Sigmoid colon (tissue), 7 donors: ENCODE measurements at regions of chr3 and their contacts with region 1.

Region 1: GRCh38 chr3:25427942-25428788 is at the start of gene RARB:
- DNase-seq: peak; percentile 92
- H3K4me3 ChIP-seq: peak within 1 kb of the TSS; percentile 62 to 73 (median 70)
- H3K27ac ChIP-seq: peak within 1 kb of the TSS; percentile 87 to 95 (median 91)
- H3K4me1 ChIP-seq: peaks cover 0 to 54% (median 42%) of the 10 kb centered on the region in 4 donors
- H3K27me3 ChIP-seq: no peaks in the 10 kb centered on the region
- CTCF ChIP-seq: no peak
- EP300 ChIP-seq: peak in 3 of 4 donors; percentile 17 to 81 (median 25)
- POLR2A ChIP-seq: peak; percentile 94 to 95
- total RNA-seq, gene RARB: 8.3 to 18.5 (median 11.9) TPM

Region 2: GRCh38 chr3:24843955-24844354 is 584.2 kb before region 1 on chr3:
- intact Hi-C with region 1: loop called (anchors 5 kb)
- DNase-seq: peak; percentile 90
- H3K4me3 ChIP-seq: no peak overlapping the region
- H3K27ac ChIP-seq: peak overlapping the region in 3 of 4 donors; percentile 48 to 60 (median 53)
- H3K4me1 ChIP-seq: peaks cover 0 to 51% (median 23%) of the 10 kb centered on the region in 4 donors
- H3K27me3 ChIP-seq: no peaks in the 10 kb centered on the region
- CTCF ChIP-seq: no peak
- EP300 ChIP-seq: peak in 1 of 4 donors; percentile 65
- POLR2A ChIP-seq: no peak

Region 3: DNA sequence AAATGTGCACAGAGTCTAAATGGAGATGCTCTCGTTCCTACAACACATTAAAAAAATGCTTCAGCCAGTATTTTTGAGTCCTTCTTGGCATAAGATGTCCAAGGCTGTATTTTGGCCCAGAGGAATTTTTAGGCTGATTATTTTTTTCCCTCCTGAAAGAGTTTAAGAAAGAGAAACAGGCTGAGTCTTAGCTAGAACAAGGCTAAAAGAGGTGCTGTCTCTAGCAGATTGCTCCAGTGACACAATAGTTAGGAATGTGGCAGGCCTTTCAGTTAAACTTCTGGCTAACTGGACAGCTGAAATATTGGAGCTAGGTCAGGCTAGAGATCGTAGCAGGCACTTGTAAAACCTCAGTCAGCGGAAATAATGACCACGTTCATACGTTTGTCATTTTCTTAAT is 271.5 kb before region 1 on chr3:
- intact Hi-C with region 1: loop called (anchors 10 kb)
- DNase-seq: no peak
- H3K4me3 ChIP-seq: no peak overlapping the region
- H3K27ac ChIP-seq: peak overlapping the region; percentile 30 to 65 (median 50)
- H3K4me1 ChIP-seq: peaks cover 0 to 23% (median 16%) of the 10 kb centered on the region in 4 donors
- H3K27me3 ChIP-seq: no peaks in the 10 kb centered on the region
- CTCF ChIP-seq: no peak
- EP300 ChIP-seq: no peak
- POLR2A ChIP-seq: no peak

Region 4: DNA sequence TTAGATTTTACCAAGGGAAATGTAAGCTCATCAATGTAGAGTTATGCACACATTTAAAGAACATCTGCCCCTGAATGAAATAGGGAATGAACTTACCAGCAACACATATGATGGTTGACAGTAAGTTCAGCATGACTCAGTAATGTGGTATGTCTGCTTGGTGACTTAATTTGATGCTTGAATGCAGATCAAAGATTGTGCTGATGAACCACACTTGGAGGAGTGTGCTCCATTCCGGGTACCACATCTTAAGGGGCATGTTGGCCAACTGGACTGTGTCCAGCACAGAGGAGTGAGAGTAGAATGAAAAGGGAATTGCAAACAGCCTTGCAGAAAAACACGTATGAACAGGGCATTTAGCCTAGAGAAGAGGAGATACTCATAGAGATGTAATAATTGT is 171.1 kb before region 1 on chr3:
- intact Hi-C with region 1: no loop called
- DNase-seq: no peak
- H3K4me3 ChIP-seq: no peak overlapping the region
- H3K27ac ChIP-seq: no peak overlapping the region
- H3K4me1 ChIP-seq: no peaks in the 10 kb centered on the region
- H3K27me3 ChIP-seq: no peaks in the 10 kb centered on the region
- CTCF ChIP-seq: no peak
- EP300 ChIP-seq: no peak
- POLR2A ChIP-seq: no peak

Region 5: DNA sequence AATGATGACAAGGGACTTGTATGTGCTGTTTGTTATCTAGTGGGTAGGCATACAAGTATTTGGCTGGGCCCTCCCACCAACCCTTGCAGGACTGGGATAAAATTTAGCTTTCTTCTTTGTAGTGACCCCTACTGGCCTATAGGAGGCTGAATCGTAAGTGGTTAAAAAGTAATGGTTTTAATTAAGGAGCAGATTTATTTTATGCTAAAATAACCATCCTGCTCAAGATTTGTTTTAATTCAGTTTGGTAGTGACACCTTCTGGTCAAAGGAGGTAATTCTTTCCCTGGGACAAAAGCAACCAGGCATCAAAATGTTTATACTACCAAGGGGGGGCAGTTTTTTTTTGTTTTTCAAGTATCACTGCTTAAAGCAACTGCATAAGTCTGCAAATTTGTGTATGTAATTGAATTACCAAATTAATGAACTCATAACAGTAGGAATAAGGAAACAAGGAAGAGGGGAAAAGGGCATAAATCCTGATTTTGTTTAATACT is 165.9 kb after region 1 on chr3:
- intact Hi-C with region 1: loop called (anchors 5 kb)
- DNase-seq: no peak
- H3K4me3 ChIP-seq: no peak overlapping the region
- H3K27ac ChIP-seq: peak overlapping the region; percentile 8 to 55 (median 23)
- H3K4me1 ChIP-seq: peaks cover 0 to 38% (median 23%) of the 10 kb centered on the region in 4 donors
- H3K27me3 ChIP-seq: no peaks in the 10 kb centered on the region
- CTCF ChIP-seq: peak; percentile 67 to 78 (median 76)
- EP300 ChIP-seq: no peak
- POLR2A ChIP-seq: no peak

Region 6: GRCh38 chr3:25789596-25790556 is 361.7 kb after region 1 on chr3 and contains the start of gene OXSM:
- intact Hi-C with region 1: loop called (anchors 5 kb)
- DNase-seq: peak; percentile 95
- H3K4me3 ChIP-seq: peak within 1 kb of the TSS; percentile 53 to 66 (median 64)
- H3K27ac ChIP-seq: peak within 1 kb of the TSS; percentile 81 to 89 (median 88)
- H3K4me1 ChIP-seq: peaks cover 0 to 38% (median 12%) of the 10 kb centered on the region in 4 donors
- H3K27me3 ChIP-seq: no peaks in the 10 kb centered on the region
- CTCF ChIP-seq: no peak
- EP300 ChIP-seq: peak in 3 of 4 donors; percentile 72 to 95 (median 90)
- POLR2A ChIP-seq: peak; percentile 61 to 86
- total RNA-seq, gene OXSM: 4.3 to 7.8 (median 5.6) TPM